Activated CD8-positive, alpha-beta T cell treated with anti-CD3 and anti-CD28 coated beads for 36 hours (primary cell): ENCODE measurements at regions of chr17 and their contacts with region 1.

Region 1: DNA sequence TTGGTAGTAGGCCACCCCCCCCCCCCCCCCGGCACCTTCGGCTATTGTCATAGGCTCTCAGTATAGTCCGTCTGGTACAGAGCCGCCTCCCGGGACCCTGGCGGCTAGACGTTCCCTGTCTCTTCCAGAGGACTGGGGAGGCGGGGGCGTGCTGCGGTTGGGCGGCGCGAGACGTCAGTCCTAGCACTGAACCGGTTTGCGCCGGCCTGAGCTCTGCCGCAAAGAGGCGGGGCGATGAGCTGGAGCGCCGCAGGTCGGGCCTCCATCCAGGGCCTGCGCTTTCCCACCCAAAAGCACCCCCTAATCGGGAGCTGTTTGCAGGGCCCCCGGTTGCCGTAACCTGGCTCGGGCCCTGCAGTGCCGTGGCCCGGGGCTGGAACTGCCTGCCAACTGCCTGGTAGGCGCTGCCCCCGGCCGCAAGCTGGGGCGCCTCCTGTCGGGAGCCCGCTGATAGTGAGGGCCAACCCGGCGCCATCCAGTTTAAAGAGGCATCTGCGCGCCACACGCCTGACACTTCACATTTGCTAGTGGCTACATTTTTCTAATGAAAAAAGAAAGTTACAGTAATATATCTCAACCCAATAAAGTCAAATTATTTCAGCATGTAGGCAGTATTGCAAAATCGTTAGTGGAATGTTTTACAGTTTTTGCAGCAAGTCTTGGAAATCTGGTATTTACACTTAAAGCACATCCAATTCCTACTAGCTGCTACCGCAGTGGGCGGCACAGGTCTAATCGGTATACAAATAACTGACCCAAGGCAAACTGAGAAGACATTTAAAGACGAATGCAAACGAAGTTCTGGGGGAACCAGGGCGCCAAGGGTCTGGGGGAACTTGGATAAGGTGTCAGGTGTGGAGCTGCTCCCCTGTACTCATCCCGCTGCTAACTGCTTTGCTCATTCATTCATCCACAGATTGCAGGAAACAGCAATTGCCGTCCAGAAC is 748 bp upstream of the USP22 start:
- DNase-seq: peak; percentile 99
- ATAC-seq: peak; percentile 81
- H3K4me3 Mint-ChIP-seq: peak overlapping the region; percentile 78
- H3K27ac Mint-ChIP-seq: peak overlapping the region; percentile 93
- H3K4me1 Mint-ChIP-seq: peaks cover 21% of the 10 kb centered on the region
- H3K27me3 Mint-ChIP-seq: no peaks in the 10 kb centered on the region
- CTCF ChIP-seq: peak; percentile 84

Region 2: GRCh38 chr17:20852239-20852989 is 191.1 kb before region 1 on chr17:
- CTCF ChIA-PET with region 1: no interaction called
- POLR2A ChIA-PET with region 1: no interaction called
- intact Hi-C with region 1: no loop called
- DNase-seq: peak; percentile 36
- ATAC-seq: peak; percentile 27
- H3K4me3 Mint-ChIP-seq: peak overlapping the region; percentile 44
- H3K27ac Mint-ChIP-seq: no peak overlapping the region
- H3K4me1 Mint-ChIP-seq: peaks cover 9% of the 10 kb centered on the region
- H3K27me3 Mint-ChIP-seq: peaks cover 42% of the 10 kb centered on the region
- CTCF ChIP-seq: no peak

Region 3: DNA sequence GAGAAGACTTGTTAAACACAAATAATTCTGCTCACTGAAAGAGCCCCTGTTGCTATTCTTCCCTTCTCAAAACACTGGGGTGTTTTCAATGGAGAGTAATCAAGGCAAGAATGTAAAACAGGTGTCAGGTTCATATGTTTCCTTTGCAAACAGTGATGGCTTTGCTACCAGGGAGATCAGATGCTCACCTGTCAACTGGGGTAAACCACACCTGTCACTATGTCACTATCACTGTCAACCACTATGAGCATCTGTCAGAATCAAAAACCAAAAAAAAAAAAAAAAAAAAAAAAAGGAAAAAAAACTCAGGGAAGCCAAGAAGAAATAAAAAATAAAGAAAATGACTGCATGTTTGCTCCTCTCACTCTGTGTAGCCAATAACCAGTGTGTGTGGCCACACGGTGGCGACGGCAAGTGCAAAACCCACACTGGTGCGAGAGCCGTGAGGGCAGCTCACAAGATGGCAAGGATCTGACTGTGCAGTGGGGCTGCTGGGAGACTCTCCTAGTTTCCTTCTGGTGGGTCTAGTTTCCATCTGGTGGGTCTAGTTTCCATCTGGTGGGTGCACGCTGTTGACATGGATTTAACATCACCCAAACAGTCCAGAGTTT is 23.5 kb before region 1 on chr17:
- CTCF ChIA-PET with region 1: interaction called, 12 read pairs
- POLR2A ChIA-PET with region 1: interaction called, 4 read pairs
- intact Hi-C with region 1: no loop called
- DNase-seq: peak; percentile 60
- ATAC-seq: peak; percentile 66
- H3K4me3 Mint-ChIP-seq: no peak overlapping the region
- H3K27ac Mint-ChIP-seq: no peak overlapping the region
- H3K4me1 Mint-ChIP-seq: peaks cover 33% of the 10 kb centered on the region
- H3K27me3 Mint-ChIP-seq: no peaks in the 10 kb centered on the region
- CTCF ChIP-seq: peak; percentile 19

Region 4: DNA sequence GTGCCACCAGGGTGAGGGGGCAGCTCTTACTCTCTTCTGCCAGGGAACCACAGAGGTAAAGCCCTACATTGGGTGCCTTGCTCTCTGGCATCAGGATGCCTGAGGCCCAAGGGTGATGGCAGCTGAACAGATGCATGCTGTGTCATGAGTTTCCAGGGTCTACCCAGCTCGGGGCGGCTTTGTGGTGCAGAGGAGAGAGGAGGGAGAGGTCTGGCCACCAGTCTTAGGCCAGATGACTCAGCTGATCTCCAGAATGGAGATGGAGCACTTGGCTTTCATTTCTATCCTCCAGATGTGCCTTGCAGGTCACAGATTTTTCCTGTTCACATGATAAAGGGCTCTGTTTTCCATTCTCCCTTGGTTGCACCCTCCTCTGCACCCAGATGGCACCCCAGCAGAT is 22.8 kb after region 1 on chr17:
- CTCF ChIA-PET with region 1: no interaction called
- POLR2A ChIA-PET with region 1: no interaction called
- intact Hi-C with region 1: no loop called
- DNase-seq: no peak
- ATAC-seq: no peak
- H3K4me3 Mint-ChIP-seq: no peak overlapping the region
- H3K27ac Mint-ChIP-seq: no peak overlapping the region
- H3K4me1 Mint-ChIP-seq: no peaks in the 10 kb centered on the region
- H3K27me3 Mint-ChIP-seq: peaks cover 2% of the 10 kb centered on the region
- CTCF ChIP-seq: no peak

Region 5: DNA sequence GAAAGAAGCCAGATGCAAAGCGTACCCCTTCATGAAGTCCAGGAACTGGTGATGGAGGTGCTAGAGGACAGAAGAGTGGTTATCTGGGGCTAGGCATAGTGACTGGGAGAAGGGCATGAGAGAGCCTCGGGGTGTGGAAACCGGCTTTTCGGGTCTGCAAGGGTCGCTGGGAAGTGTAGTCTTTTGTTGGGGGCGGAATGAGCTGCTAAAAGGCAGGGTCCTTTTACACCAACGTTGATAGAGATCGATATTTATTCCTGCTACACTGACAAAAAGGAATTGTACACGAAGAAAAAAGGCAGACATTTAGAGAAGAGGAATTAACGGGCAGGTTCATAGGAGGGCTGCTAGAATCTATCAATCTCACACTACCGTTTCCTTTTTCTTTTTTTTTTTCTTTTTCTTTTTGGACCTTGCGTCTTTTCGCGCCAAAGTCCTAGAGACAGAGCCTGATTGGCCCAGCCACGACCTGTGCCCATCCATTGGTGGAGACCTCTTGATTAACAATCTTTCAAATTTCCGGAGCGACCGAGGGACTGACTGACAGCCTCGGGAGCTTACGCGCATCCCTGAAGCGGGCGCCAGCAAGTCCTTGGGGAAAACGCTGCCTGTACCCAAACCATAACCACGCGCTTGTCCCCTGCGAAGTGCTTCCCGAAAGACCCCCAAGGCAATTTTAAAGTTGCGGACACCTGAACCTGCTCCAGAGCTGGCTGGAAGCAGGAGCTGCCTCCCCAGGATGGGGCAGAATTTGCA is 55.6 kb after region 1 on chr17:
- CTCF ChIA-PET with region 1: interaction called, 33 read pairs
- POLR2A ChIA-PET with region 1: interaction called, 8 read pairs
- intact Hi-C with region 1: loop called (anchors 5 kb)
- DNase-seq: peak; percentile 90
- ATAC-seq: peak; percentile 97
- H3K4me3 Mint-ChIP-seq: peak overlapping the region; percentile 92
- H3K27ac Mint-ChIP-seq: peak overlapping the region; percentile 99
- H3K4me1 Mint-ChIP-seq: peaks cover 6% of the 10 kb centered on the region
- H3K27me3 Mint-ChIP-seq: no peaks in the 10 kb centered on the region
- CTCF ChIP-seq: no peak

Region 6: DNA sequence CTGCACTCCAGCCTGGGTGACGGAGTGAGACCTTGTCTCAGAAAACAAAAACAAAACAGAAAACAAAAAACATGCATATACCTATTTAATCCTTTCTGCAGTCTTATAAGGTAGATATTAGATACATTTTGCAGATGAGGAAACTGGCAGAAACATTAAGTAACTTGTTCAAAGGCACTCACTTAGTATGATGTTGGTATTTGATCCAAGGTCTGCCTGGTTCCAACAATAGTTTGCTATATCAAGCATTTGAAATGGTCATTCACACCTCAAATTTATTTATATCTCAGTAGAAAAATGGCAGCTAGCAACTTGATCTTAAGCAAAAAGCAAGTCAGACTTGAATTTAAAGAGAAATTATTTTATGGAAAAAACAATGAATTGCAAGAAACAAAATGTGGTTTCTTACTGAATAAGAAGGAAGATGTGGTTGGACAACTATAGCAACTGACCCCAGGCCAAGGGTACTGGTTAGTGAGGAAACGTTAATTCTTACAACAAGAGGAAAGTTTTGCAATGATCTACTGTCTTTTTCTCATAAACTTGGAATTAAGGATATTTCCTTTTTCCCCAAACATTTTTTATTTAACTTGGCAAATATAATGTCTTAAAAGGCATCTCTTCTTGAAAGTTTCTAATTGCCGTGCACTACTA is 102.9 kb after region 1 on chr17:
- CTCF ChIA-PET with region 1: no interaction called
- POLR2A ChIA-PET with region 1: no interaction called
- intact Hi-C with region 1: no loop called
- DNase-seq: no peak
- ATAC-seq: no peak
- H3K4me3 Mint-ChIP-seq: no peak overlapping the region
- H3K27ac Mint-ChIP-seq: no peak overlapping the region
- H3K4me1 Mint-ChIP-seq: peaks cover 2% of the 10 kb centered on the region
- H3K27me3 Mint-ChIP-seq: no peaks in the 10 kb centered on the region
- CTCF ChIP-seq: no peak

Region 7: DNA sequence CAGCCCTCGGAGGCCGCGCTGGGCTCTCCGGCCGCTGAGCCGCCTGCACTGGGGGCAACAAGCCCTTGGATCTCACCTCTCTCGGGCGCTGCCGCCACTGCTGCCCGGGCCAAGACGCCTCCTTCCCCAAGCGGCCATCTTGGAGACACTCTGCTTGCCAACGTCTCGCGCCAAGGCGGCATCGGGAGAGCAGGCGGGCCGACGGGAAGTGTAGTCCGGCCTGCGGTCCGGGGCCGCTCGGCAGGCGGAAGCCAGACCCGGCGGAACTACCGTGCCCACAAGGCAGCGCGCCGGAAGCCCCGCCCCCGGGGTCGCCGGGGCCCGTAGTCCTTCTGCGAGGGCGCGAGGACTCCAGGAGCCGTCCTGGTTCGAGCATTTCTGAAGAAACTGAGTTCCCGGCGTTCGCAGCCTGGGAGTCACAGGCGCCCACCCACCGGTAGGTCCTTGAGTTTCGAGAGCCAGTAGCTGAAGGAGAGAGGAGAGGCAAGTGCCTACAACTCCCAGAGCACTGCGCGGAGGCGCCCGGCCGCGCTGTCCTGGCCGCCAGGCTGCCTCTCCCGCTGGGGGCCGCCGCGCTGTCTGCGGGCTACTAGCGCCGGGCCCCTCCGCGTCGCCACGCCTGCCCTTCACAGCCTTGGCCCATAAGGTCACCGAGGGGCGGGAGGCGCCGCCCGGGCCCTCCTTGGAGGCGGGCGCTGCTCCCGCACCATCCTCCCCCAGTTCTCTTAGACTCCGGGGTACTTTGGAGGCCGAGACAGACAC is 170.6 kb after region 1 on chr17 and contains the start of gene TMEM11:
- CTCF ChIA-PET with region 1: interaction called, 11 read pairs
- POLR2A ChIA-PET with region 1: interaction called, 4 read pairs
- intact Hi-C with region 1: no loop called
- DNase-seq: peak; percentile 96
- ATAC-seq: peak; percentile 95
- H3K4me3 Mint-ChIP-seq: peak within 1 kb of the TSS; percentile 95
- H3K27ac Mint-ChIP-seq: peak within 1 kb of the TSS; percentile 94
- H3K4me1 Mint-ChIP-seq: peaks cover 68% of the 10 kb centered on the region
- H3K27me3 Mint-ChIP-seq: no peaks in the 10 kb centered on the region
- CTCF ChIP-seq: no peak
- total RNA-seq, gene TMEM11: 26.2 to 28.9 TPM

Region 8: GRCh38 chr17:21284319-21285163 is 241.0 kb after region 1 on chr17 and contains the start of gene MAP2K3:
- CTCF ChIA-PET with region 1: interaction called, 4 read pairs
- POLR2A ChIA-PET with region 1: interaction called, 4 read pairs
- intact Hi-C with region 1: loop called (anchors 10 kb)
- DNase-seq: peak; percentile 99
- ATAC-seq: peak; percentile 78
- H3K4me3 Mint-ChIP-seq: peak within 1 kb of the TSS; percentile 99
- H3K27ac Mint-ChIP-seq: peak within 1 kb of the TSS; percentile 95
- H3K4me1 Mint-ChIP-seq: peaks cover 48% of the 10 kb centered on the region
- H3K27me3 Mint-ChIP-seq: no peaks in the 10 kb centered on the region
- CTCF ChIP-seq: no peak
- total RNA-seq, gene MAP2K3: 151 to 153 TPM